PC-3 (cell line): ENCODE measurements at regions of chr13 and their contacts with region 1.

Region 1: DNA sequence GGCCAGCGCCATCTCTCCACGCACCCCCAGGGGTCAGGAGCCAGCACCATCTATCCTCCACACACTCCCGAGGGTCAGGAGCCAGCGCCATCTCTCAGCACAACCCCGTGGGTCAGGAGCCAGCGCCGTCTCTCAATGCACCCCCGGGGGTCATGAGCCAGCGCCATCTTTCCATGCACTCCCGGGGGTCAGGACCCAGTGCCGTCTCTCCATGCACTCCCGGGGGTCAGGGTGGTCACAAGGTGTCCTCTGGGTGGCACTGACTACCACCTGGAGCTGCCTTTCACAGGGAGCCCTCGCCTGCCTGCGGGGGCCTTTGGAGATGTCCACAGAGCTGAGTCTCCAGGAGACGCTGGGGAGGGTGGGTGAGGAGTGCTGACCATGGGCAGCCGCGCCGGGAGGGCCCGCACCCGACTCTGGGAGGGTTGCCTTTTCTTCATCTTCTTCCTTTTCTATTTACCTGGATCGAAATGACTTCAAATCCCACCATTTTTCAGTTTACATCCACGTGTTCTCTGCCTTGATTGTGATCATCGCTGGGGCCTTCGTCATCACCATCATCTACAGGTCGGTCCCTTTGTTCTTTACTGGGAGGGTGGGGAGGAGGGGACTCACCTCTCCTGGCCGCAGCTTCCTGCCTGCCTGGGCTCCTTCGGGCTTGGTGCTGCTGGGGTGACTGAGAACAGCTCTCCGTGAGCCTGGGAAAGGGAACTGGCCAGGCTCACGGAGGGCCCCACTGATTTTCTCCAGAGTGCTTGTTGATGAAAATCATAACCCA is 19.1 kb downstream of the TEX29 start:
- DNase-seq: no peak
- ATAC-seq: no peak
- H3K4me3 ChIP-seq: no peak overlapping the region
- H3K27ac ChIP-seq: no peak overlapping the region
- H3K4me1 ChIP-seq: no peaks in the 10 kb centered on the region
- H3K27me3 ChIP-seq: peaks cover 13% of the 10 kb centered on the region
- CTCF ChIP-seq: no peak

Region 2: DNA sequence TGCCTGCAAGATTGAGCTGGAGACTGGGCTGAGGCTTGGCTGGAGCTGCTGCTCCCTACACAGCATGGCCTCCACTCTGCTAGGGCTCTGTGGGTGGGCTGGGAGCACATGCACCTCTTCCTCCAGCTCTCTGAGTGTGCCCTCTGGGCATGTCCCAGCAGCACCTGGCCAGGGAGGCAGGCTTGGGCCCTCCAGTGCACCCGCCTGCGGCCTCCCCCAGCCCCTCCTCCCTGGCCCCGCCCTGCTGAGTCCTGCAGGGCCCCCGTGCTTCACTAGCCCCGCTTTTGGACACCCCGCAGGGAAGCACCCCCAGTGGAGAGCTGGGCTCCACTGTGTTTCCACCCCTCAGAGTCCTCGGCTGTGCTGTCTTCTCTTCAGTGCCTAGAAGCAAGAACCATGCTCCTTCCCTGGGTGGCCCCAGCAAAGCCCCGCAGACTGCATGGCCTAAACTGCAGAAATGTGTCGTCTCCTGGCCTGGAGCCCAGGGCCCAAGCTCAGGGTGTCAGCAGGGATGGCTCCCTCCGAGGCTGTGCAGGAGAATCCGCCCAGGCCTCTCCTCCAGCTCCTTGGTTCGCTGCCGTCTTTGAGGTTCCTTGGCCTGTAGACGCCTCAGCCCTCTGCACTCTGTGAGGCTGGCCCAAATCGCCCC is 24.1 kb before region 1 on chr13:
- CTCF ChIA-PET with region 1: no interaction called
- POLR2A ChIA-PET with region 1: interaction called, 17 read pairs
- intact Hi-C with region 1: no loop called
- DNase-seq: no peak
- ATAC-seq: no peak
- H3K4me3 ChIP-seq: no peak overlapping the region
- H3K27ac ChIP-seq: no peak overlapping the region
- H3K4me1 ChIP-seq: no peaks in the 10 kb centered on the region
- H3K27me3 ChIP-seq: no peaks in the 10 kb centered on the region
- CTCF ChIP-seq: no peak